Endothelial cell of umbilical vein (primary cell): ENCODE measurements at regions of chr1 and their contacts with region 1.

Region 1: GRCh38 chr1:58699011-58699762 is 675 bp downstream of the MYSM1 start:
- DNase-seq: peak; percentile 63
- H3K4me3 ChIP-seq: peak overlapping the region; percentile 75 to 92 (median 86)
- H3K27ac ChIP-seq: peak overlapping the region; percentile 89
- H3K4me1 ChIP-seq: peaks cover 8% of the 10 kb centered on the region
- H3K27me3 ChIP-seq: no peaks in the 10 kb centered on the region
- CTCF ChIP-seq: no peak
- POLR2A ChIP-seq: peak; percentile 5

Region 2: GRCh38 chr1:57572016-57572415 is 1127.2 kb before region 1 on chr1:
- CTCF ChIA-PET with region 1: no interaction called
- POLR2A ChIA-PET with region 1: no interaction called
- dilution Hi-C with region 1: no loop called
- intact Hi-C with region 1: no loop called
- DNase-seq: no peak
- H3K4me3 ChIP-seq: no peak overlapping the region
- H3K27ac ChIP-seq: no peak overlapping the region
- H3K4me1 ChIP-seq: no peaks in the 10 kb centered on the region
- H3K27me3 ChIP-seq: no peaks in the 10 kb centered on the region
- CTCF ChIP-seq: no peak
- POLR2A ChIP-seq: no peak

Region 3: GRCh38 chr1:58718435-58718834 is 19.2 kb after region 1 on chr1:
- CTCF ChIA-PET with region 1: interaction called, 3 read pairs
- POLR2A ChIA-PET with region 1: interaction called, 3 read pairs
- dilution Hi-C with region 1: no loop called
- intact Hi-C with region 1: loop called (anchors 2 kb)
- DNase-seq: peak; percentile 68
- H3K4me3 ChIP-seq: peak overlapping the region in 1 of 3 experiments; percentile 40
- H3K27ac ChIP-seq: peak overlapping the region; percentile 46
- H3K4me1 ChIP-seq: peaks cover 31% of the 10 kb centered on the region
- H3K27me3 ChIP-seq: no peaks in the 10 kb centered on the region
- CTCF ChIP-seq: no peak
- POLR2A ChIP-seq: no peak

Region 4: DNA sequence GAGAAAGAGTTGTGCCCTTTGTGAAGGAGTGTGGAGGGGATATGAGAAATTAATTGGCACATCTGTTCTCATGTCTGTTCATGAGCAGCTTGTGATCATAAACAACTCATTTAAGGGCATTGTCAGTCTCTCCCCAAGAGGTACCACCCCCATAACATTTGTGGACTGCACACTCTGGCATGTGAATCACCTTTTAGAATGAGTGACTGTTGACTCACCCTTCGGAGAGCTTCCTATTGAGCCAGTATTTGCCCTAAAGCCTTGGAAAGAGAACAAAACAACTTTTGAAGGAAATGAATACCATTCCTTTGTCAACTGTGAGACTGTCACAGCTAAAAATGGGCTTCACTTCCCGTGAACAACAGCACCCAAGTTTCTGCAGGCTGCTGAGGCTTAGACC is 28.2 kb after region 1 on chr1:
- CTCF ChIA-PET with region 1: interaction called, 3 read pairs
- POLR2A ChIA-PET with region 1: no interaction called
- dilution Hi-C with region 1: no loop called
- intact Hi-C with region 1: loop called (anchors 1 kb)
- DNase-seq: peak; percentile 97
- H3K4me3 ChIP-seq: no peak overlapping the region
- H3K27ac ChIP-seq: peak overlapping the region; percentile 88
- H3K4me1 ChIP-seq: peaks cover 19% of the 10 kb centered on the region
- H3K27me3 ChIP-seq: no peaks in the 10 kb centered on the region
- CTCF ChIP-seq: no peak
- POLR2A ChIP-seq: no peak

Region 5: DNA sequence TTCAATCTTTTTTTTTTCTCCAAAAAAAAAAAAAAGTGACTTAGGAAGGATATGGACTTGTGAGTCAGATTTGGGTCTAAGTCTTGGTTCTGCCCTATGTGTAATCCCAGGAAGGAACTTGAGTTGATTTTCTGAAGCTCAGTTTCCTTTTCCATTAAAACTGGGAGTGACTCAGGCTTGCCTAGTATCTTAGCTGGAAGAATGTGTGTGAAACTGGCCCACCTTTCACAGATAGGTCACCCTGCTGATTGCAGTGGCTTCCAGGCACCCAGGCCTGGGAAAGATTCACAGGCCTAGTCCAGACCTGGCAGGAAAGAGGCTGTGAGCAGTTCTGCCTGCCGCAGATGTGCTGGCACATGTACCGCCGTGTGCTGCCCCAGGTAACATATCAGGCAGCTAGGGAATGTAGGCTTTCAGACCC is 897.3 kb after region 1 on chr1:
- CTCF ChIA-PET with region 1: no interaction called
- POLR2A ChIA-PET with region 1: no interaction called
- dilution Hi-C with region 1: no loop called
- intact Hi-C with region 1: loop called (anchors 1 kb)
- DNase-seq: peak; percentile 98
- H3K4me3 ChIP-seq: no peak overlapping the region
- H3K27ac ChIP-seq: peak overlapping the region; percentile 83
- H3K4me1 ChIP-seq: peaks cover 29% of the 10 kb centered on the region
- H3K27me3 ChIP-seq: no peaks in the 10 kb centered on the region
- CTCF ChIP-seq: no peak
- POLR2A ChIP-seq: no peak